CD8-positive, alpha-beta memory T cell (primary cell): ENCODE measurements at regions of chr1 and their contacts with region 1.

Region 1: GRCh38 chr1:45521398-45522323 is at the start of gene PRDX1:
- DNase-seq: peak; percentile 83 to 97 (median 92)
- H3K4me3 ChIP-seq: peak within 1 kb of the TSS; percentile 96
- H3K4me3 Mint-ChIP-seq: peak within 1 kb of the TSS; percentile 88 to 97 (median 94)
- H3K27ac ChIP-seq: peak within 1 kb of the TSS; percentile 82
- H3K27ac Mint-ChIP-seq: peak within 1 kb of the TSS; percentile 62 to 95 (median 90)
- H3K4me1 ChIP-seq: peaks cover 24% of the 10 kb centered on the region
- H3K4me1 Mint-ChIP-seq: peaks cover 24 to 37% (median 27%) of the 10 kb centered on the region in 3 donors
- H3K27me3 ChIP-seq: no peaks in the 10 kb centered on the region
- H3K27me3 Mint-ChIP-seq: peaks cover 0 to 3% of the 10 kb centered on the region in 2 donors
- total RNA-seq, gene PRDX1: 784 to 849 TPM

Region 2: DNA sequence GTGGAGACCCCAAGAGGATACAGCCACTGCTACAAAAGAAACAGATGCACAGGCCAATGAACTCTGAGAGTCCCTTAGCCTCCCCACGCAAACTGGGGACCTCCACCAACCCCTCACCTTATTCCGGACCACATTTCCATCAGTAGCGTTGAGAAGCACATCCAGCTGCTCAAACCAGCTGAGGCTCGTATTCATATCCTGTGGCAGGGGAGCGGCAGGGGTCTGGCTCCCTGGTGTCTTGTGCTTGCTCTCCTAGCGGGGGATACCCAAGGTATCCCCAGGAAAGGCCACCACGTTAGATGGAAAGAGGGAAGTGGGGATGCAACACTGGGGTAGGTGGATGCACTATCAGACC is 22.3 kb before region 1 on chr1:
- CTCF ChIA-PET with region 1: interaction called, 7 read pairs
- POLR2A ChIA-PET with region 1: interaction called, 18 read pairs
- DNase-seq: no peak
- H3K4me3 ChIP-seq: peak overlapping the region; percentile 69
- H3K4me3 Mint-ChIP-seq: peak overlapping the region; percentile 93 to 97 (median 94)
- H3K27ac ChIP-seq: peak overlapping the region; percentile 59
- H3K27ac Mint-ChIP-seq: peak overlapping the region; percentile 71 to 97 (median 91)
- H3K4me1 ChIP-seq: peaks cover 15% of the 10 kb centered on the region
- H3K4me1 Mint-ChIP-seq: peaks cover 28 to 36% (median 35%) of the 10 kb centered on the region in 3 donors
- H3K27me3 ChIP-seq: no peaks in the 10 kb centered on the region
- H3K27me3 Mint-ChIP-seq: no peaks in the 10 kb centered on the region

Region 3: GRCh38 chr1:45550401-45551351 is 29.0 kb after region 1 on chr1 and contains the start of gene AKR1A1:
- CTCF ChIA-PET with region 1: interaction called, 6 read pairs
- POLR2A ChIA-PET with region 1: interaction called, 13 read pairs
- DNase-seq: peak; percentile 76 to 88 (median 84)
- H3K4me3 ChIP-seq: peak within 1 kb of the TSS; percentile 91
- H3K4me3 Mint-ChIP-seq: peak within 1 kb of the TSS; percentile 93 to 99 (median 97)
- H3K27ac ChIP-seq: peak within 1 kb of the TSS; percentile 86
- H3K27ac Mint-ChIP-seq: peak within 1 kb of the TSS; percentile 91 to 99 (median 97)
- H3K4me1 ChIP-seq: peaks cover 20% of the 10 kb centered on the region
- H3K4me1 Mint-ChIP-seq: peaks cover 22 to 25% (median 25%) of the 10 kb centered on the region in 3 donors
- H3K27me3 ChIP-seq: no peaks in the 10 kb centered on the region
- H3K27me3 Mint-ChIP-seq: no peaks in the 10 kb centered on the region
- total RNA-seq, gene AKR1A1: 204 to 217 TPM